ENCODE measurements at regions of chr10 and their contacts with region 1.

Region 1: GRCh38 chr10:14837757-14838581 is at the starts of genes CDNF, HSPA14 and MSANTD7:
- DNase-seq: peak; percentile 97 to 100 (median 99)
- ATAC-seq: peak; percentile 88 to 93
- H3K4me3 Mint-ChIP-seq: peak within 1 kb of the TSS; percentile 88 to 99 (median 94)
- H3K27ac Mint-ChIP-seq: peak within 1 kb of the TSS; percentile 95 to 99 (median 98)
- H3K4me1 Mint-ChIP-seq: peaks cover 11 to 39% (median 28%) of the 10 kb centered on the region in 4 donors
- H3K27me3 Mint-ChIP-seq: no peaks in the 10 kb centered on the region
- polyA plus RNA-seq, gene CDNF: 1.4 to 2.6 (median 2.2) TPM
- polyA plus RNA-seq, gene HSPA14: 15.1 to 18.9 (median 17.6) TPM
- polyA plus RNA-seq, gene MSANTD7: 4.6 to 9.9 (median 9.2) TPM

Region 2: DNA sequence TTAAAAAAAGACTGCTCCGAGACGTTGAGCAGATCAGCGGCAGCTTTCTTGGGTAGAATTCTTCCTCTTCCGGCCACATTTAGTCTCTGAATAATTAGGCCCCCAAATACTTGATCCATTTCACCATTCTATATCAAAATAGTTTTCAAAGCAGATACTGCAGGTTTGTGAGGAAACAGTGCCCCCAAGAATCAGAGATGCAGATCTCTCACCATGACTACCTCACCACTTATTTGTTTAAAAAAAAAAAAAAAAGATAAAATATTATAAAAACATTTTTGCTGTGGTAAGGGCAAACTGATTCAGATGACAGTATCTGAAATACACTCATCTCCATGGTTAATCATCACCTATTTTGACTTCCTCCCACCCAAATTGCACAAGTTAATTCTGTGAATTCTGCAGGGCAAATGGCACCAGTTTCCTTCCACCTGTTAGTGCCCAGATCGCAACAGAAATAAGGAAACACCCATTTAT is 273.7 kb before region 1 on chr10:
- POLR2A ChIA-PET with region 1: interaction called, 18 read pairs
- DNase-seq: peak in 5 of 10 donors; percentile 22 to 78 (median 69)
- ATAC-seq: peak; percentile 49 to 64
- H3K4me3 Mint-ChIP-seq: peak overlapping the region; percentile 66 to 92 (median 79)
- H3K27ac Mint-ChIP-seq: peak overlapping the region; percentile 92 to 99 (median 98)
- H3K4me1 Mint-ChIP-seq: peaks cover 55 to 98% (median 93%) of the 10 kb centered on the region in 4 donors
- H3K27me3 Mint-ChIP-seq: no peaks in the 10 kb centered on the region

Region 3: GRCh38 chr10:14571866-14572507 is 266.0 kb before region 1 on chr10:
- POLR2A ChIA-PET with region 1: interaction called, 18 read pairs
- DNase-seq: peak; percentile 26 to 93 (median 81)
- ATAC-seq: peak; percentile 67 to 76
- H3K4me3 Mint-ChIP-seq: peak overlapping the region; percentile 90 to 98 (median 96)
- H3K27ac Mint-ChIP-seq: peak overlapping the region; percentile 92 to 99 (median 99)
- H3K4me1 Mint-ChIP-seq: peaks cover 34 to 92% (median 80%) of the 10 kb centered on the region in 4 donors
- H3K27me3 Mint-ChIP-seq: no peaks in the 10 kb centered on the region

Region 4: GRCh38 chr10:14583252-14583651 is 254.7 kb before region 1 on chr10:
- POLR2A ChIA-PET with region 1: interaction called, 19 read pairs
- DNase-seq: peak; percentile 61 to 94 (median 86)
- ATAC-seq: peak; percentile 70 to 78
- H3K4me3 Mint-ChIP-seq: peak overlapping the region; percentile 72 to 90 (median 83)
- H3K27ac Mint-ChIP-seq: peak overlapping the region; percentile 90 to 100 (median 98)
- H3K4me1 Mint-ChIP-seq: peaks cover 49 to 98% (median 95%) of the 10 kb centered on the region in 4 donors
- H3K27me3 Mint-ChIP-seq: no peaks in the 10 kb centered on the region

Region 5: DNA sequence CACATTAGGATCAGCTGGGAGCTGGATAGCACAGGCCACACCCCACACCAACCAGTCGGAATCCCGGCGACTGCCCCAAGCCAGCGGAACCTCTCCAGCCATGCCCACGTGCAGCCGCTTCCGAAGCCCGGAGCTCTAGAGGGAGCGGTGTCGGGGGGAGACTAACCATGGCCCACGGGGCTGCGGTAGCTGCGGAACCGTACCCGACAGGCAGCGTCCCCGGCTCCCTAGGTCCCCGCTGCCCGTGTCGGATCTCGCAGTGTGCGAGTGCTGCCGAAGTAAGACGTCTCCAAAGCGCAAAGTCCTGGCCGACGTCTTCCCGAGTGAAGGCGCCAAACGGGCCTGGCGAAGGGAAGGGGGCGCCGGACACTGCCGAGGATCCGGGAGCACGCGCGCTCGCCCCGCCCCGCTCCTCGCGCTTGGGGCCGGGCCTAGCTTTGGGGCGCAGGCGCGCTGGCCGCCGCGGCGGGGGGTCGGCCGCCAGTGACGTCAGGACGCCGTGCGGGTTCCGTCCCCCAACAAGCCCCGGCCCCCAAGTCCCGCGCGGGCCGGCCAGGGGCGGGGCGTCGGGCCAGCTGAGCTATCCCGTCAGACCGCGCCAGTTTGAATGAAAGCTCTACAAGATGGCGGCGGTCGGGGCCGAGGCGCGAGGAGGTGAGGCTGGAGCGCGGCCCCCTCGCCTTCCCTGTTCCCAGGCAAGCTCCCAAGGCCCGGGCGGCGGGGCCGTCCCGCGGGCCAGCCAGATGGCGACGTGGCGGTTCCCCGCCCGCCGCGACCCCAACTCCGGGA is 40.5 kb after region 1 on chr10 and contains the start of gene SUV39H2:
- POLR2A ChIA-PET with region 1: interaction called, 30 read pairs
- DNase-seq: peak; percentile 82 to 94 (median 89)
- ATAC-seq: peak; percentile 84 to 85
- H3K4me3 Mint-ChIP-seq: peak within 1 kb of the TSS; percentile 91 to 97 (median 94)
- H3K27ac Mint-ChIP-seq: peak within 1 kb of the TSS; percentile 66 to 98 (median 90)
- H3K4me1 Mint-ChIP-seq: peaks cover 13 to 35% (median 34%) of the 10 kb centered on the region in 4 donors
- H3K27me3 Mint-ChIP-seq: no peaks in the 10 kb centered on the region
- polyA plus RNA-seq, gene SUV39H2: 2.8 to 8.6 (median 3.7) TPM

Region 6: GRCh38 chr10:14911801-14912200 is 73.8 kb after region 1 on chr10:
- POLR2A ChIA-PET with region 1: no interaction called
- DNase-seq: no peak
- ATAC-seq: no peak
- H3K4me3 Mint-ChIP-seq: no peak overlapping the region
- H3K27ac Mint-ChIP-seq: no peak overlapping the region
- H3K4me1 Mint-ChIP-seq: peaks cover 5 to 12% (median 10%) of the 10 kb centered on the region in 4 donors
- H3K27me3 Mint-ChIP-seq: no peaks in the 10 kb centered on the region

Region 7: GRCh38 chr10:14954001-14954770 is 116.2 kb after region 1 on chr10 and contains the start of gene DCLRE1C:
- POLR2A ChIA-PET with region 1: interaction called, 14 read pairs
- DNase-seq: peak; percentile 78 to 92 (median 84)
- ATAC-seq: peak; percentile 90 to 92
- H3K4me3 Mint-ChIP-seq: peak within 1 kb of the TSS; percentile 87 to 96 (median 94)
- H3K27ac Mint-ChIP-seq: peak within 1 kb of the TSS; percentile 91 to 98 (median 97)
- H3K4me1 Mint-ChIP-seq: peaks cover 27 to 73% (median 71%) of the 10 kb centered on the region in 4 donors
- H3K27me3 Mint-ChIP-seq: no peaks in the 10 kb centered on the region
- polyA plus RNA-seq, gene DCLRE1C: 15.8 to 20.5 (median 16.9) TPM

Region 8: GRCh38 chr10:14959276-14960057 is 121.5 kb after region 1 on chr10 and contains the start of gene MEIG1:
- POLR2A ChIA-PET with region 1: interaction called, 14 read pairs
- DNase-seq: peak; percentile 86 to 100 (median 94)
- ATAC-seq: peak; percentile 86 to 90
- H3K4me3 Mint-ChIP-seq: peak within 1 kb of the TSS; percentile 93 to 98 (median 96)
- H3K27ac Mint-ChIP-seq: peak within 1 kb of the TSS; percentile 95 to 99 (median 97)
- H3K4me1 Mint-ChIP-seq: peaks cover 14 to 36% (median 35%) of the 10 kb centered on the region in 4 donors
- H3K27me3 Mint-ChIP-seq: no peaks in the 10 kb centered on the region
- polyA plus RNA-seq, gene MEIG1: 0.55 to 2.2 TPM in 2 of 3 donors, not detected in the other

Measured in naive thymus-derived CD8-positive, alpha-beta T cell (primary cell).